ENCODE measurements at regions of chr3 and their contacts with region 1.

Region 1: DNA sequence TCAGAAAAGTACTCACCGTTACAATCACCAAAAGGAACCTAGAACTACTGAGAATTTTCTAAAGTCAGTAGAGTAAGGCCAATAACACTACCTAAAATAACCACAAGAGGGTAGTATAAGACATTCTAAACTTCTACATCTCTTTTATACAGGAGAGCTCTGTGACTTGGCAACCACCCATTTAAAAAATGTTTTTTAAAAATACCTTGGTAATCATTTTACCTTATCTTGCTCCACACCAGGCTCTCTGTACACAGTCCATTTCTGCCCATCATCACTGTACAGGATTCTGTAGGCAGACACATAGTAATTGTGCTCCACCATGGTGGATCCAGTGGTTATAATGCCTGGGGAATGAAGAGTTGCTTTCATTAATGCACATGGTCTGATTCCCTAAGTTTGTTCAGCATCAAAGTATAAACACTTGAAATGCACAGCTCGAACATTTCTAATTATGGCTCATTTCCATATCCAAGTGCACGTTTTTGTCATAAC is 54.5 kb downstream of the ST3GAL6 start:
- DNase-seq: no peak
- H3K4me3 Mint-ChIP-seq: no peak overlapping the region
- H3K27ac Mint-ChIP-seq: no peak overlapping the region
- H3K4me1 Mint-ChIP-seq: no peaks in the 10 kb centered on the region
- H3K27me3 Mint-ChIP-seq: no peaks in the 10 kb centered on the region

Region 2: DNA sequence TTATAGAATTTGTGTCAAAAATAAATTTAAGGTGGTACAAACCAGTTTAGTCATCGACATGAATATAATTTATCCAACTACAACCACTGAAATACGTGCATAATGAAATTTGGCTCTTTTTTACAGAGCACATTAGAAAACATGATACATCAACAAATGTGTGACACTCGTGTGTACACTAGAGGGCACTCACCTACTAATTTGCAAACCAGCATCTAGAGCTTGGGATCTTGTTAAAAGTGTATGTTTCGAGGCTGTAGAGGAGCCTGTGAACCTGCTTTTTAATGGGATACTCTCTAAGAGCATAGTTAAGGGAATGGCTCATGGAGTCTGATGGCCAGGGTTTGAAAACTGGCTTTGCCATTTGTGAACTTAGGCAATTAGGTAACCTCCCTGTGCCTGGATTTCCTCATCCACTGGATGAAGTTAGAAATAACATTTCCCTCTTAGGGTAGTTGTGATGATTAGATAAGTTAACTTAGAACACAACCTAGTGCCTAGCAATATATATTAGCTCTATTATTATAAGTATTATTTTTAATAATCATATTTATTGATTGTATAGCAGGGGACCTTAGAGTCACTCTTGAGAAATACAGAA is 215.4 kb before region 1 on chr3:
- intact Hi-C with region 1: loop called (anchors 1 kb)
- DNase-seq: peak; percentile 74
- H3K4me3 Mint-ChIP-seq: no peak overlapping the region
- H3K27ac Mint-ChIP-seq: no peak overlapping the region
- H3K4me1 Mint-ChIP-seq: peaks cover 11% of the 10 kb centered on the region
- H3K27me3 Mint-ChIP-seq: peaks cover 17% of the 10 kb centered on the region

Region 3: DNA sequence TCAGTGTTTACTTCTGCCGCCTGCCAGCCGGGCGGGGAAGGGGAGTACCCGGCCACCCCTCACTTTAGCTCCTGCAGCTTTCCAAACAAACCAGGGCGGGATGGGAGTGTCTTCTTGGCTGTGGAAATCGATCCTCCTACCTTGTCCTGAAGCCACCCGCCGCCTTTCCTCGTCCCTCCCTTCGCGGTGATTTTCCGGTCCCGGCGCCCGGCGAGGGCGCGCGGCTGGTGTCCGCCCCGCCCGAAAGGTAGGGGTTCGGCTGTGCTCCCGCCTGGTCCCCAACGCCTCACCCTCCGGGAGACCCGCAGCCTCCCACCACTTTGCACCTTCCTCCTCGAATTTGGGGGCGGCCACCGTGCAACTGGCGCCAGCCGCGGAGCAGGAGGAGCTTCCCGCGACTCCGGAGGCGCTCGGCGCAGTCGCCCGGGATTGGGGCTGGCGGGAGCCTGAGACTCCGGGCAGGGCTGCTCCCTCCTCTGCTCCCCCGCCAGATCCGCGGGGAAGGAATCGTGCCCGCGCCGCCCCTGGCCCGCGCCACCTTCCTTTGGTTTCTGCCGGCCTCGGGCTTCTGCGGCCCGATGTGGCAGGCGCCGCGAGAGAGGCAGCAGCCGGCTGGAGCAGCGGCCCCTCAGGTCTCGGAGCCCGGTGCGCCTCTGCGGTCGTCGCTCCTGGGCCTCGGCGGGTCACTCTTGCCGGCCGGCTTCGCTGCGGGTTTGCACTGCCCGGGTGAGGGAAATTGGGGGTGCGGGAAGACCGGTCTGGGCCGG is 85.1 kb before region 1 on chr3:
- intact Hi-C with region 1: loop called (anchors 5 kb)
- DNase-seq: peak; percentile 67
- H3K4me3 Mint-ChIP-seq: peak overlapping the region; percentile 81
- H3K27ac Mint-ChIP-seq: no peak overlapping the region
- H3K4me1 Mint-ChIP-seq: peaks cover 15% of the 10 kb centered on the region
- H3K27me3 Mint-ChIP-seq: peaks cover 72% of the 10 kb centered on the region

Region 4: GRCh38 chr3:98901392-98902350 is 84.1 kb after region 1 on chr3 and contains the start of gene DCBLD2:
- intact Hi-C with region 1: loop called (anchors 5 kb)
- DNase-seq: peak; percentile 99
- H3K4me3 Mint-ChIP-seq: peak within 1 kb of the TSS; percentile 89
- H3K27ac Mint-ChIP-seq: peak within 1 kb of the TSS; percentile 77
- H3K4me1 Mint-ChIP-seq: peaks cover 14% of the 10 kb centered on the region
- H3K27me3 Mint-ChIP-seq: peaks cover 29% of the 10 kb centered on the region
- total RNA-seq, gene DCBLD2: 2.7 and 3.8 TPM in 2 replicates

Region 5: DNA sequence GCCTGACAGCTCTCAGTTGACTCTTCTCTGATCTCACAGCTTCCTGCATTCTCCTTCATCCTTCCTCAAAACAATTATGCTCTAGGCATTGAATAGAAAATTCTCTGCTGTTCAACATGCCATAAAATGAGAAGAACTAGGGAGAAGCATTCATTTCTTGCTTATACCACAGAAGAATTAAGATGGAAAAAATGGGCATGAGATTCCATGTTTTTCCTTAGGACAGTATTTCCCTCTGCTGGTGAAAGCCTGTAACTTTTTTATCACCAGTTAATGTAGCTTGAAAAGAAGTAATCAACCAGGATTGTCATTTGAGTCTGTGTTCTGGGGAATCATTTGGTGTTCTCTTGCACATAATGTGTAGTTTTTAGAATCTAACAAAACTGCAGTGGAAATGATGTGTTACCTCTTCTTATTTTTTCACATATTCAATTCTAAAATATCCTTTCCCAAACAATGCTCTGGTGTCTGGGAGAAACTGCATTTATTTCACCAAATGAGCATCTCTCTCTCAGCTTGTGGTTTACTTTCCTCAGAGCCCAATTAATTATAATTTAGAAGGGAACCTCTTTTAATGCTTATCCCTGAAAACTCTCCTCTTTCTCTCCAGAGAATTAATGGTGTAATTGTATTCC is 176.7 kb after region 1 on chr3:
- intact Hi-C with region 1: loop called (anchors 5 kb)
- DNase-seq: no peak
- H3K4me3 Mint-ChIP-seq: no peak overlapping the region
- H3K27ac Mint-ChIP-seq: no peak overlapping the region
- H3K4me1 Mint-ChIP-seq: no peaks in the 10 kb centered on the region
- H3K27me3 Mint-ChIP-seq: peaks cover 6% of the 10 kb centered on the region

Region 6: DNA sequence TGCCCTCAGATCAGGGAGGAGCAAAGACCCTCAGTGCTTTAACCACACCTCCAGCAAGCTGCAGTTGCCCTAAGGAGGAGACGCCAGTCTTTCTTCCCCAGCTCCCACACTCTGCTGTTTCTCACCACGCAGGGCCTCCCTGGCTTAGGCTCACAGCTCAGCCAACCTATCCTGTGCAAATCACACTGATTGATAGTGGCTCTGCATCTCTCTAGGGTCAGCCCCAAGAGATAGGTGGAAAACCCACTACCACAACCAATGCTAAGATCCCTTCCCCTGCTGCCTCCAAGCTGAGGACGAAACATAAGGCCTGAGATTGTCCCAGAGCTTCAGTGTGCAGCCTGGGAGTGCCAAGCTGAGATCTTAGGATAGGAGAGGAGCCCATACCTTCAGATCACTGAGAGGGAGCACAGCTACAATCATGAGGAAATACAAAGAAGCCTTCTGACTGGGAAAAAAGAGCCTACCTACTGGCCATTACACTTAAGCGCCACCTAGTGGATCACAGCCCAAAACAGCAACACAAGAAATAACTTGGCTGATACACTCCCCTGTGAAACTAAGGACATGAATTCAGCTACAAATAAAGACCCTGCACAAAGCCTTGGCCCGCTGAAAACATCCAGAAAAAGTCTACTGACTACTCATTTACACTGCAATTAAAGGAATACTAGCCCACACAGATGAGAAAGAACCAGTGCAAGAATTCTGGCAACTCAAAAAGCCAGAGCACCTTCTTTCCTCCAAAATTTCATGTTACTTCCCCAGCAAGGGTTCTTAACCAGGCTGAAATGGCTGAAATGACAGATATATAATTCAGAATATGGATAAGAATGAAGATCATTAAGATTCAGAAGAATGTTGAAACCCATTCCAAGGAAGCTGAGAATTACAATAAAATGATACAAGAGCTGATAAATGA is 355.4 kb after region 1 on chr3:
- intact Hi-C with region 1: loop called (anchors 1 kb)
- DNase-seq: peak; percentile 80
- H3K4me3 Mint-ChIP-seq: no peak overlapping the region
- H3K27ac Mint-ChIP-seq: no peak overlapping the region
- H3K4me1 Mint-ChIP-seq: no peaks in the 10 kb centered on the region
- H3K27me3 Mint-ChIP-seq: peaks cover 1% of the 10 kb centered on the region

Region 7: DNA sequence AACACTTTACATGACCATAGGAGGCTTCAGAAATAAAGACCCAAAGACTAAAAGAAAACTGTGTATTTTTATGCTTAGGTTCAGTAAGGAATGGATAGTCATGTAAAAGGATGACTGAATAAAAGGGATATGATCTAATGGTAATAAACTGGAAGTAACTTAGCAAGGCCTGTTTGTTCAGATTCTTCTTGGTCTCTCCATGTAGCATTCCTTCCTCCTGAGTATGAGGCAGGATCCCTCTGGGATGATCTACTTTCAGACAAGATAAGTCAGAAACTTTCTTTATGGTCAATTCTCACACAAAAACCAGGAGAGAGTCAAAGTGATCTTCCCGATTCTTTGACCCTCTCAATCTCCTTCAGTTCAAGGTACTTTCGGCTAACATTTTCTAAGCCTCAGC is 424.7 kb after region 1 on chr3:
- intact Hi-C with region 1: no loop called
- DNase-seq: no peak
- H3K4me3 Mint-ChIP-seq: no peak overlapping the region
- H3K27ac Mint-ChIP-seq: no peak overlapping the region
- H3K4me1 Mint-ChIP-seq: no peaks in the 10 kb centered on the region
- H3K27me3 Mint-ChIP-seq: no peaks in the 10 kb centered on the region

Region 8: DNA sequence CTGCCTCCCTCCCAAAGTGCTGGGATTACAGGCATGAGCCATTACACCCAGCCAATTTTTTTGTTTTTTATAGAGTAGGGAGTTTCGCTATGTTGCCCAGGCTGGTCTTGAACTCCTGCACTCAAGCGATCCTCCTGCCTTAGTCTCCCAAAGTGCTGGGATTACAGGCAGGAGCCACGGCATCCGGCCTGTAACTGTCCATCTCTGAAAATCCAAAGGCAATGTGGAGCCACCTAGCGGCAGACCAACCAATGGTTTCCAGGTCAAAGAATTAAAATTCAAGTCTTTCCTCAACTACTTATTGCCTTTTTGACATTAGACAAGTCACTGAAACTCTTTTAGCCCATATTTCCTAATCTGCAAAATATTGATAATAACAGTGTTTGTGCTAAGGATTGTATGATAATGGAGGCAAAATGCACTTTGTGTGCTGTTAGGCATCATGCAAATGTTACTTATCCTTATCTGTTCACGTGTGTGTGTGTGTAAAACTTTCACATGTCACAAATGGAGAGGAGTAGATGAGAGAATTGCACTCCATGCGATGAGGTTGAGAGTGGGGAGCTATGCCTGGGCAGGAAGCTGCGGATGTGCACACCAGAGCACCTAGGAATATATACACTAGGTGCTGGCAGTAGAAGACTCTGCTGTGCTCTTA is 869.5 kb after region 1 on chr3:
- intact Hi-C with region 1: loop called (anchors 5 kb)
- DNase-seq: peak; percentile 80
- H3K4me3 Mint-ChIP-seq: no peak overlapping the region
- H3K27ac Mint-ChIP-seq: no peak overlapping the region
- H3K4me1 Mint-ChIP-seq: no peaks in the 10 kb centered on the region
- H3K27me3 Mint-ChIP-seq: peaks cover 8% of the 10 kb centered on the region